ENCODE measurements at regions of chr3 and their contacts with region 1.

Region 1: GRCh38 chr3:184371570-184372018 is 6.4 kb downstream of the THPO start:
- DNase-seq: peak; percentile 86
- H3K4me3 Mint-ChIP-seq: no peak overlapping the region
- H3K27ac Mint-ChIP-seq: no peak overlapping the region
- H3K4me1 Mint-ChIP-seq: peaks cover 11% of the 10 kb centered on the region
- H3K27me3 Mint-ChIP-seq: peaks cover 23% of the 10 kb centered on the region
- CTCF ChIP-seq: peak; percentile 94

Region 2: DNA sequence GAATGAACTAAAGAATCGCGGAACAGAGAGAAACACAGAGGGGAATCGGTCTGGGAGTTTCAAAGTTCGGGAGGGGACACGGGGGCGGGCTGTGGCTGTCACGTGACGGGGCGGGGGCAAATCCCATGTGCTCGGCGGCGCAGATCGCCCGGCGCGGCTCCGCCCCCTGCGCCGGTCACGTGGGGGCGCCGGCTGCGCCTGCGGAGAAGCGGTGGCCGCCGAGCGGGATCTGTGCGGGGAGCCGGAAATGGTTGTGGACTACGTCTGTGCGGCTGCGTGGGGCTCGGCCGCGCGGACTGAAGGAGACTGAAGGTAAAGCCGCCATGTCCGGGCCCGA is 57.3 kb before region 1 on chr3 and contains the start of gene EIF4G1:
- CTCF ChIA-PET with region 1: no interaction called
- POLR2A ChIA-PET with region 1: no interaction called
- intact Hi-C with region 1: no loop called
- DNase-seq: peak; percentile 89
- H3K4me3 Mint-ChIP-seq: peak within 1 kb of the TSS; percentile 87
- H3K27ac Mint-ChIP-seq: peak within 1 kb of the TSS; percentile 88
- H3K4me1 Mint-ChIP-seq: peaks cover 27% of the 10 kb centered on the region
- H3K27me3 Mint-ChIP-seq: no peaks in the 10 kb centered on the region
- CTCF ChIP-seq: no peak
- total RNA-seq, gene EIF4G1: 522 and 536 TPM in 2 replicates

Region 3: GRCh38 chr3:184391266-184391665 is 19.7 kb after region 1 on chr3:
- CTCF ChIA-PET with region 1: interaction called, 12 read pairs
- POLR2A ChIA-PET with region 1: interaction called, 5 read pairs
- intact Hi-C with region 1: no loop called
- DNase-seq: no peak
- H3K4me3 Mint-ChIP-seq: no peak overlapping the region
- H3K27ac Mint-ChIP-seq: no peak overlapping the region
- H3K4me1 Mint-ChIP-seq: no peaks in the 10 kb centered on the region
- H3K27me3 Mint-ChIP-seq: peaks cover 19% of the 10 kb centered on the region
- CTCF ChIP-seq: no peak

Region 4: DNA sequence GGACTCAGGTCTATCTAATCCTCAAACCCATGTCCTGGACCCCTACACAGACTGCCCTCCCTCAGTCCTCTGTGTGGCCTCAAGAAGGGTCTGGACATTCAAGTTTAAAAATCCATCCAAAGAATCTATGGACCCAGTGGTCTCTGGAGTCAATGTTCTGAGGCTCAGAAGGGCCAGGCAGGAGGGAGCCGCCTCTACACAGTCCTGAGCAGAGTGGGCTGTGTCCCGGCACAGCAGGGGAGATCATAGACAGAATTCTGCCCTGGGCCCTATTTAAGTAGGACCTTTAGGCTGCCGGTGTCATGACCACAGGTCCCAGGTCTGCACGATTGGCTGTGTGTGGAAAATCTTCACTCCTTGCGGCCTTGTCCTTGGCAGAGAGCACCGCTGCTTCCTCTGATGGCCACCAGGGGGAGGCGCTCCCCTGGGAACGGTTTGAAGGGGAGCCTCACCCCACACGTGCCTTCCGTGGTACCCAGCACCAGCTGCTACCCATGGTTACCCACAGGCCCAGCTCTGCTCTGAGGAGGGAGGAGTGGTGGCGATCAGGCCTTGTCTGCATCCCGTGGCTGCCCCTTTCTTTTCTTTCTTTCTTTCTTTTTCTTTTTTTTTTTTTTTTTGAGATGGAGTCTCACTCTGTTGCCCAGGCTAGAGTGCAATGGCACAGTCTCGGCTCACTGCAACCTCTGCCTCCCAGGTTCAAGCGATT is 46.2 kb after region 1 on chr3:
- CTCF ChIA-PET with region 1: interaction called, 40 read pairs
- POLR2A ChIA-PET with region 1: interaction called, 3 read pairs
- intact Hi-C with region 1: loop called (anchors 2 kb)
- DNase-seq: peak; percentile 72
- H3K4me3 Mint-ChIP-seq: no peak overlapping the region
- H3K27ac Mint-ChIP-seq: no peak overlapping the region
- H3K4me1 Mint-ChIP-seq: no peaks in the 10 kb centered on the region
- H3K27me3 Mint-ChIP-seq: peaks cover 2% of the 10 kb centered on the region
- CTCF ChIP-seq: peak; percentile 91

Region 5: GRCh38 chr3:184423561-184423960 is 52.0 kb after region 1 on chr3:
- CTCF ChIA-PET with region 1: interaction called, 40 read pairs
- POLR2A ChIA-PET with region 1: interaction called, 3 read pairs
- intact Hi-C with region 1: no loop called
- DNase-seq: no peak
- H3K4me3 Mint-ChIP-seq: no peak overlapping the region
- H3K27ac Mint-ChIP-seq: no peak overlapping the region
- H3K4me1 Mint-ChIP-seq: peaks cover 10% of the 10 kb centered on the region
- H3K27me3 Mint-ChIP-seq: peaks cover 16% of the 10 kb centered on the region
- CTCF ChIP-seq: no peak

Region 6: DNA sequence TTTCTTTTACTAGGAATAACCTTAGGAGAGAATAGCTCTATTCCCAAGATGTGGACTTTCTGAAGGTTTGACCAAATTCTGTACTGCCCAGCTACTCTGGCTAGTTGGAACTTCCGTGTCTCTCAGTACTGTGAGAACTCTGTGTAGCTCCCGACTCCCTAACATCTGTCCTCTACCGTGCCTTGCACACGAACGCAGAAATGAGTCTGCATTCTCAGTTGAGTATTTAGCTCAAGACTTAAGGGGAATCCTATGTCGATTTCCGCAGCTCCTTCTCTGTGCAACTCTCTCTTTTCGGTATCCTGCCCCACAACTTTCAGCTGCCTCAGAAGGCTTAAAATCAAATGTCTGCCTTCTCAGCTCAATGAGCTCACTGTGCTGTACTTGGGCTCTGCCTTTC is 103.3 kb after region 1 on chr3:
- CTCF ChIA-PET with region 1: interaction called, 67 read pairs
- POLR2A ChIA-PET with region 1: interaction called, 10 read pairs
- intact Hi-C with region 1: no loop called
- DNase-seq: no peak
- H3K4me3 Mint-ChIP-seq: no peak overlapping the region
- H3K27ac Mint-ChIP-seq: no peak overlapping the region
- H3K4me1 Mint-ChIP-seq: no peaks in the 10 kb centered on the region
- H3K27me3 Mint-ChIP-seq: peaks cover 90% of the 10 kb centered on the region
- CTCF ChIP-seq: no peak

Region 7: DNA sequence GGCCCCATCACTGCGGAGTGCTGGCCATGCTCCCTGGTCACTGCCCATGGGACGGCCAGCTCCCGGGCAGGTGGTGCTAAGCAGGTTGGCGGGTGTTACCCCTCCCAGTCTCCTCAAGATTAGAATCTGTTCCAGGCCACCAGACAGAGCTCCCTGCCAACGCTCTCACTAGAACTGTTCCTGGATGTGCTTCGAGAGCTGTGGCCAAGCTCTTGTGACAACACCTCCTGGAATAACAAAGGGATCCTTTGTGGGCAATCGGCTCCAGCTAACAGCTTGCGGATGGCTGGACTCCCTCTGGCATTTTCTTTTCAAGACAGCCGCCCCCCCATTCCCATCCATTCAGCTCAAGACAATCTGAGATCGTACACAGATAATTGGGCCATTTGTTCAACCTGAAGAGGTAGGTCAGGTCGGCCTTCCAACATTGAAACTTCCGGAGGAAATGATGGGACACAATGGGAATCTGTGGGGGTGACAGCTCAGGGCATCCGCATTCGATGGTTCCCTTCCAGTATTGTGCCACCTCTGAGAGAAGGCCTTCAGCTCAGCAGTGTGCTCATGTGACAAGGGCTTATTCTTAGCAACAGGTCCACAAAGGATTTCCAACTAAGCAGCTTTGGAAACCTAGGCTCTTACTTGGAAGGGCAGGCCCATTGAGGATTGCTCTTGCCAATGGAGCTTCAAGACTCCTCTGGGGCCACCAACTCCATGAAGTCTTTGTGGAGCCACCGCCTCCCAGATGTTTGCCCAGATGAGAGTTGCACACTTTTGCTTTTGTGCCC is 178.4 kb after region 1 on chr3:
- CTCF ChIA-PET with region 1: interaction called, 212 read pairs
- POLR2A ChIA-PET with region 1: interaction called, 7 read pairs
- intact Hi-C with region 1: no loop called
- DNase-seq: no peak
- H3K4me3 Mint-ChIP-seq: no peak overlapping the region
- H3K27ac Mint-ChIP-seq: no peak overlapping the region
- H3K4me1 Mint-ChIP-seq: peaks cover 4% of the 10 kb centered on the region
- H3K27me3 Mint-ChIP-seq: peaks cover 35% of the 10 kb centered on the region
- CTCF ChIP-seq: no peak

Region 8: DNA sequence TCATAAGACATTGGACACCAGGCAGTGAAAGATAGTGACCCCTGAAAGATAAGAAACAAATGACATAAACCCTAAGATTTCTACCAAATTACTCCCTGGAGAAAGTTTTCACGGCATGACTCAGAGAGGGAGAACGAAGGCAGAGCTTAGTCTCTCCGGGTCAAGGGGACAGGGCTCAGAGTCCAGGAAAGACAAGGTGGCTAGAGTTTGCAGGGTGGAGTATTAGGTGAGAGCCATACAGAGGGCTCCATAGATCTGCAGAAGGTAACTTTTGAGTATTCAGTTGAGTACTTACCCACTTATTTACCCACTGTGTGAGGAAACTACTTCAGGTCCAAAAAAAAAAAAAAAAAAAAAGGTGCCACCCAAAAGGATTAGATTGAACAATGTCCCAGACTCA is 638.1 kb after region 1 on chr3:
- CTCF ChIA-PET with region 1: no interaction called
- POLR2A ChIA-PET with region 1: no interaction called
- intact Hi-C with region 1: no loop called
- DNase-seq: no peak
- H3K4me3 Mint-ChIP-seq: no peak overlapping the region
- H3K27ac Mint-ChIP-seq: no peak overlapping the region
- H3K4me1 Mint-ChIP-seq: no peaks in the 10 kb centered on the region
- H3K27me3 Mint-ChIP-seq: no peaks in the 10 kb centered on the region
- CTCF ChIP-seq: no peak

Region 9: DNA sequence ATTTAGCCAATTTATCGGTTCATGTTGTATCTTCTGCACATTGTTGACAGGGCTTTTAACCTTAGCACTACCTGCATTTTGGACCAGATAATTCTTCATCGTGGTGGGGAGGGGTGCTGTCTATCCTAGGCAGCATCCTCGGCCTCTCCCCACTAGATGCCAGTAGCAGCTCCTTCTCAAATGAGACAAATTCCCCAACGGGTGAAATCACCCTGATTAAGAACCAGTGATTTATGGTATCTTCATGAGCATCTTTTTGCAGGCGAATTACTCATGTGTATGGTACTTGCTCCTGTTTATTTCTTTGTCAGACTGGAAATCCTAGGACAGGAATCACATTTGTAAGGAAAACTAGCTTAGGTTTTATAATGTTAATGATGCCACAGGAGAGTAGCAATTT is 713.3 kb after region 1 on chr3:
- CTCF ChIA-PET with region 1: no interaction called
- POLR2A ChIA-PET with region 1: no interaction called
- intact Hi-C with region 1: no loop called
- DNase-seq: no peak
- H3K4me3 Mint-ChIP-seq: no peak overlapping the region
- H3K27ac Mint-ChIP-seq: no peak overlapping the region
- H3K4me1 Mint-ChIP-seq: no peaks in the 10 kb centered on the region
- H3K27me3 Mint-ChIP-seq: peaks cover 23% of the 10 kb centered on the region
- CTCF ChIP-seq: no peak

Measured in MCF 10A (cell line).